Sciatic nerve (tissue), 2 donors: ENCODE measurements at regions of chr15 and their contacts with region 1.

Region 1: GRCh38 chr15:74768771-74769342 is 13.0 kb upstream of the CSK start:
- DNase-seq: peak; percentile 83
- ATAC-seq: peak; percentile 65

Region 2: GRCh38 chr15:74382004-74382816 is 386.6 kb before region 1 on chr15:
- intact Hi-C with region 1: loop called (anchors 5 kb)
- DNase-seq: peak; percentile 93
- ATAC-seq: peak; percentile 92

Region 3: GRCh38 chr15:74631408-74632247 is 137.2 kb before region 1 on chr15:
- intact Hi-C with region 1: loop called (anchors 5 kb)
- DNase-seq: peak; percentile 81
- ATAC-seq: peak; percentile 70

Region 4: DNA sequence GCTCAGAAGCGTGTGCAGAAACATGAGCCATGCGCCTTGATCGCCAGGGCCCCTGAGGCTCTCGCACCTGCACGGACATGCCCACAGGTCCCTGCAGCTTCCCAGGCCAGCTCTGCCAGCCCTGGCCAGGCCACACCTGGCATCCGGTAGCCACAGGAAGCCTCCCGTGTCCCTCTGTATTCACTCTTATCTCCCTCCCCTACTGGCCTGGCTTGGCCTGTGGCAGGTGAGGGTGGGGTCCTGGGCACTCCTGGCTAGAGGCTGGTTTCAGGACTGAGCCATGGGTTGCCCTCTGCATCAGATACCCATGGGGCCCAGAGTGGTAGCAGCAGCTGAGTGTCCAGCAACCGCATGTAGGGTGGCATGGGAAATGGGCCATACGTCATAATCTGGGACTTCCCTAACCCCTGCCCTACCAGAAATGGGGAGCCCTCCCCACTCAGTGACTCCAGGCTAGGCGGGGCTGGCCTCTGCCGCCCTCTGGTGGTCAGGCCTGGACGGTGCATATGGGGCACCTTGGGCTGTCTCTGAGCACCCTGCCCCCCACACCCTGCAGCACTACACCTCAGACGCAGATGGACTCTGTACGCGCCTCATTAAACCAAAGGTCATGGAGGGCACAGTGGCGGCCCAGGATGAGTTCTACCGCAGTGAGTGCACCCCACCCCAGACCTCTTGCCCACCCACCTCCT is 31.1 kb after region 1 on chr15:
- intact Hi-C with region 1: loop called (anchors 2 kb)
- DNase-seq: peak; percentile 83
- ATAC-seq: peak; percentile 91